Dorsolateral prefrontal cortex (tissue), 120 donors: ENCODE measurements at regions of chr9 and their contacts with region 1.

Region 1: DNA sequence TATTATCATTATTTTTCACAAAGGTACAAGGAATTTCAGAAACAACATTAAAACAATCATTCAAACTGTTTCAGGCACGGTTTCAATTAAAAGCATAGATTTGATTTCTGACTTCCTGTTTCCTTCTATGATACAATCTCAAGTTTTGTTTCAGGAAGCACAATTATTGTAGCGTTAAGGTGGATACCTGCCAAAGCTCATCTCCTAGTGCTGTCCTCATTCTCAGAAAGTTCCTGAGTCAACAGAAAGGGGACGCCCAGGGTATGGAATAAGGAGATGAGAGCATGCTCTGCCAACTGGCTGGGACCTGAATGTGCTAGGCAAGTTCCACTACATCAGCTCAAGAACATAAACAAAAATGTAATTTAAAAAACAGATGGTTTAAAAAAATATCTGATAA is 2.0 kb upstream of the TRIM14 start:
- DNase-seq: no peak
- H3K4me3 ChIP-seq: no peak overlapping the region
- H3K27ac ChIP-seq: no peak overlapping the region
- H3K27me3 ChIP-seq: no peaks in the 10 kb centered on the region
- CTCF ChIP-seq: no peak

Region 2: DNA sequence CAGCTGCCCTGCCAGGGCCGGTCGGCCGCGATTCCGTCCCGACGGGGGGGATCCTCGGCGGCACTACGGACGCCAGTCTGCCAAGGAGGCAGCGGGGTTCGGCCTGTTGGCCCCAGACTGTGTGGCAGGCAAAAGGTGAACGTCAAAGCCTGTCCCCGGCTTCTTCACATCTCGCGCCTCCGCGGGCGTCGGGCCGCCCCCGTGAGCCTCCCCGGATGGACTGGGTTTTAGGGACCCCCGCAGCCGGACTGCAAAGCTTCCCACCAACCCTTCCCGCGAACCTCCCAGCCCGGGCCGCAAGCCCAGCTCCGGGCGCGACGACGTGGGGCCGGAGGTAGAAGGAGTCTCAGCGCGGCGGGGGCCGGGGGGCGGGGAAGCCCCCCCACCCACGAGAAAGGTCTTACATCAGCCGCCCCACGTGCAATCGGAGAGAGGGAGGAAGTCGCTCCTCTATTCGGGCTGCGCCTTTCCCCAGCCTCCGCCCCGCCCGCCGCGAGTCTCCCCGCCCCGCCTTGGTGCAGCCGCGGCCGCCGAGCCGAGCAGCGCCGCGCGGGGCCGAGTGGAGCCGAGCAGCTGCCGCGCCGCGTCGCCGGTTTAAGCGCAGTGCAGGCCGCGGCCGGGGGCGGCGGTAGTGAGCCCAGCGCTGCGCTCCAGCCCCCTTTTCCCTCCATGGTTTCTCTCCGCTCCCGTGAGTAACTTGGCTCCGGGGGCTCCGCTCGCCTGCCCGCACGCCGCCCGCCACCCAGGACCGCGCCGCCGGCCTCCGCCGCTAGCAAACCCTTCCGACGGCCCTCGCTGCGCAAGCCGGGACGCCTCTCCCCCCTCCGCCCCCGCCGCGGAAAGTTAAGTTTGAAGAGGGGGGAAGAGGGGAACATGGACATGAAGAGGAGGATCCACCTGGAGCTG is 138.1 kb before region 1 on chr9 and contains the start of gene ANP32B:
- intact Hi-C with region 1: no loop called
- DNase-seq: peak; percentile 83 to 95 (median 88)
- H3K4me3 ChIP-seq: peak within 1 kb of the TSS; percentile 64 to 96 (median 89)
- H3K27ac ChIP-seq: peak within 1 kb of the TSS; percentile 80 to 100 (median 98)
- H3K27me3 ChIP-seq: no peaks in the 10 kb centered on the region
- CTCF ChIP-seq: peak; percentile 49 to 98 (median 80)
- total RNA-seq, gene ANP32B: 41.2 to 135 (median 66.8) TPM

Region 3: DNA sequence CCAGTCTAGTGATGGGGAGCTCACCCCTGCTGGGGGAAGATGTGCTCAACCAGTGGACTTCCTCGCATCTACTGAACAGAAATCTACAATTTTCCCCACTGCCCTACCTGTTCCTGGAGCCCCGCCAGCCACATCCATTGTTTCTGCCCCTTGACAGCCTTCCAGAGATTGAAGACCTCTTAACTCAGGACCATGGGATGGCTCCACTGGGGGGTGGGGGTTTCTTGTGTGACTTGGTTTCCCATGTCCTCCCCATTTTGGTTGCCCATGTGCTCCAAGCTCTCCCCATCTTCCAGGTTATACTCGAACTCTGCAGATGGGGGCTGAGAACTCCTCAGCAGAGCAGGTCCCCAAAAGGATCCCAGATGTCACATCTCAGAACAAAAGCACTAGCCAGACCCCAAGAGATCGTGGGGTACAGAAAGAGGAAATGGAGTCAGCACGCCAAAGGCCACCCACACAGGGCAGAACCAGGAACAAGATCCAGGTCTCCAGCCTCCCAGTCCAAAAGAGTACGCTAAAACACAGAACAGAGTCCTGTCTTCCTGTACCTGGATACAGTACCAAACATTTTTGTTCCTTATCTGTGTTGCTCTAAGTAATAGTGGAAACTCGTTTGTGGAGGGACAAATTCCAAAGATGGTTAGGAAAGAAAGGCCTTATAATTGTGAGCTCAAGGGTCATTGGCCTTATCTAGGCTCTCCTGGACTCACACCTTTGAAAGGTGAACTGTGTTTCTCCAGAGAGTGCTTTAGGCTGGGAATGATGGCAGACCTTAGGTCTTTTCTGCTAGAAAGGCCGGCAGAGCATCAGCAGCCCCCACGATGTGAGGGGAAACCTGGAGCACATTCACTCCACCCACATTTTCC is 55.6 kb after region 1 on chr9:
- intact Hi-C with region 1: loop called in 1 of 2 experiments (anchors 2 kb)
- DNase-seq: no peak
- H3K4me3 ChIP-seq: no peak overlapping the region
- H3K27ac ChIP-seq: no peak overlapping the region
- H3K27me3 ChIP-seq: no peaks in the 10 kb centered on the region
- CTCF ChIP-seq: no peak

Region 4: DNA sequence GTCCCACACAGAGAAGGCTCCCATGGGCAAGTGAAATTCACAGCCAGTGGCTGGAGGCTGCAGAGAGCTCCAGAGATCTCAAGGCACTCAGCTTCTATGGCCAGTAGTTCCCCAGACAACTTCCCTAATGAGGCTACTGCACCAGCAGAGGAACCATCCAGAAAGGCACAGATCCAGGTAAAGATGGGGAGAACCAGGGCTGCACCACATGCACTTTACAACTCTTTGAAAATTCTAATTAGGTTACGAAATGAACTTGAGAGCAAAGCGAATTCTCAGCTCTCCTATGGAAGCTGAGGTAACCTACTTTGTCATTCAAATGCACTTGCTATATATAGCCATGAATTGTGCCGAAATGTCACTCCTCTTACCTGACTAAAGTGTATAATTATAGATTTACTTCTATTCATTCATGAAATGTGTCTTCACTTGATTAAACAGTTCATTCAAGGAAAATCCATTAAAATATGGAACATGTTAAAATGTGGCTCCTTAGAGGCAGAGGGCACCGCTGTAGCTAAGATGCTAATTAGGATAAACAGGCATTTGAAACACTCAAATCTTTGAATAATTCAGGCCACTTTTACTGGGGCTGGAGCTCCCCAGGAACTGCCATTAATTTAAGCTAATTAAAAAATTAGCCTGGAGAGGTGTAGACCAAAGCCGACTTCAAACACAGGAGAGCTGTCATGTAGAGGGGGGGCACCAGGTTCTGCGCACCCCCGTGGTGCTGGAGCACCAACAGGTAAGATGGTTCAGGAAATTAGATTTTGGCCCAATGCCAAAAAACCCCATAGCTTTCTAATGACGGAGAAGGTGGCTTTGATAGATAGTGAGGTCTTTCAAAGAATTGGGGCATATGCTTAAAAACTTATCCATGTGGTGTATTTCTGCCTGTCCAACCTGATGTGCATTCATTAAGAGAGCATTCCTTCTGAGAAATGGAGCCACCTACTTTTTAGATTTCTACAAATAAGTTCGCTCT is 383.5 kb after region 1 on chr9:
- intact Hi-C with region 1: no loop called
- DNase-seq: no peak
- H3K4me3 ChIP-seq: peak overlapping the region in 1 of 59 donors; percentile 11
- H3K27ac ChIP-seq: peak overlapping the region in 1 of 59 donors; percentile 14
- H3K27me3 ChIP-seq: peaks cover 0 to 4% (median 0%) of the 10 kb centered on the region in 45 donors
- CTCF ChIP-seq: no peak

Region 5: DNA sequence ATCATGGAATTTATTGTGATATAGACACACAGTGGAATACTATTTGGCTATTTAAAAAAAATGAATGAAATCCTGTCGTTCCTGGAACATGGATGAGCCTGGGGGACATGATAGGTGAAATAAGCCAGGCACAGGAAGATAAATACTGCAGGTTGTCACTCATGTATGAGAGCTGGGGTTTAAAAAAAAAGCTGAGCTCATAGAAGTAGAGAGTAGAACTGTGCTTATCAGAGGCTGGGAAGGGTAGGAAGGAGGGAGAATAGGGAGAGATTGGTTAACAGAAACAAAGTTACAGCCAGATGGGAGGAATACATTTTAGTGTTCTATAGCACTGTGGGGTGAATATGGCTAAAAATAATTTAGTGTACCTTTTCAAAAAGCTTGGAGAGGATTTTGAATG is 1500.0 kb after region 1 on chr9:
- intact Hi-C with region 1: no loop called
- DNase-seq: no peak
- H3K4me3 ChIP-seq: no peak overlapping the region
- H3K27ac ChIP-seq: no peak overlapping the region
- H3K27me3 ChIP-seq: no peaks in the 10 kb centered on the region
- CTCF ChIP-seq: no peak